ENCODE measurements at regions of chr11 and their contacts with region 1.

Region 1: DNA sequence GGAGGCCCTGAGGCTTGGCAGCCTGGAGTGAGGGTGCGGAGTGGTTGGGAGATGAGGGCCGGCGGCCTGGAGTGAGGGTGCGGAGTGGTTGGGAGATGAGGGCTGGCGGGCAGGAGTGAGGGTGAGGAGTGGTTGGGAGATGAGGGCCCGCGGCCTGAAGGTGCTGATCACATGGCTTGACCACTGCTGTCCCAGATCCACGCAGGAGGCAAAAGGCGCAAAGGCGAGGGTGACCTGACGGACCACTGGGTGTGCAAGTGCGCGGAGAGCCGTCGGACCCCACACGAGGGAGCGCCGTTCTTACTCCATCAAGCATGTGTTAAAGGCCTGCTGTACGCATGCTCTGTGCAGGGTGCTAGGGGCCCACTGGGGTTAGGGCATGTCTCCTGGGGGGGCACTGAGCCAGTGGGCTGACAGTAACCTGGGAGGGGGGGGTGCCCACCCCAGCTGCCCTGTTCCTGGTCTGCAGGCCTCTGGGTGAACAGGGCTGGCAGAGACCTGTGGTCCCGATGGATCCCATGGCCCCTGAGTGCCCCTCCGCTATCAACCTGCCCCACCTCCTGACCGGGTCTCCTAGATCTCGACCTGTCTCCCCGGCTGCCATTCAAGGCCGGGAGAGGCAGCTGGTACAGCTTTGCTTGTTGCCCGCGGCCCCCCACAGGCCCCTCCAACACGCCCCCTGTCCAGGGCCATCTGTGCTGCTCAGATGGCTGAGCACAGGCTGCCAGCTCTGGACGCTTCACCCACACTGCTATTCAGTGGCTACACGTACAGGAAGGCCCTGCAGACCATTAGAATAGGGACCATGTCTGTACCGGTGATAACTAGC is 21.1 kb downstream of the MRGPRD start:
- DNase-seq: no peak
- H3K4me3 ChIP-seq: no peak overlapping the region
- H3K4me3 Mint-ChIP-seq: no peak overlapping the region
- H3K27ac ChIP-seq: no peak overlapping the region
- H3K27ac Mint-ChIP-seq: no peak overlapping the region
- H3K4me1 ChIP-seq: peaks cover 18% of the 10 kb centered on the region in 2 donors
- H3K4me1 Mint-ChIP-seq: peaks cover 19% of the 10 kb centered on the region
- H3K27me3 ChIP-seq: no peaks in the 10 kb centered on the region
- H3K27me3 Mint-ChIP-seq: peaks cover 1 to 8% (median 2%) of the 10 kb centered on the region in 3 donors
- CTCF ChIP-seq: no peak

Region 2: DNA sequence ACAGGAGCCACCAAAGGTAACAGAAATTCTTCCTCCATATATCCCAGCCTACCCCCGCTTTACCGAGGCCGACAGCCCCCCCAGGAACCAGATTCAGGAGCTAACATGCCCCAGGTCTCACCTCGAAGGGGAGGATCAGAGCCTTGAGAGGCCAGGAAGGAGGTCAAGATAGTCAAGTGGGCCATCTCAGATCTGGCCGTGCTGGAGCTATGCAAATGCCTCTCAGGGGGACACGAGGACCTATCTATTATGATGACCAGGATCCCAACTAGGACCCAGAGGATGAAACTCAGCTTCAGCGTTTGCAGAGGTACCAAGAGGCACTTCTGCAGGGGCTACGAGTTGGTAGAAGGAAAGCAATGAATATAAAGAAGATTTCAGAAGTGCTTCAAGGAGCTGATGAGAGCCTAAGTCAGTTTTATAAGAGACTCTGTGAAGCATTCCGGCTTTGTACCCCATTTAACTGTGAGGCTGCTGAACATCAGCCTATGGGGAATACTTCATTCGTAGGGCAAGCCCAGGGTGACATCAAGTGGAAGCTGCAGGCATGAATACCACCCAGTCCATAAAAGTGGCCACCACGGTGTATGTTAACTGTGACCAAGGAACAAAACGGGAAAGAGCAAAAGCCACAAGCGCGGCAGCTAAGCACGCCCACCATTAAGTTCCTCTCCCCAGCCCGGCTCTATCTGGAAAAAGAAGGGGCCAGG is 90.3 kb before region 1 on chr11:
- intact Hi-C with region 1: no loop called
- DNase-seq: peak; percentile 6 to 26 (median 25)
- H3K4me3 ChIP-seq: peak overlapping the region; percentile 51 to 90 (median 80)
- H3K4me3 Mint-ChIP-seq: peak overlapping the region; percentile 98 to 99
- H3K27ac ChIP-seq: peak overlapping the region in 1 of 2 donors; percentile 46
- H3K27ac Mint-ChIP-seq: peak overlapping the region in 5 of 7 donors; percentile 61 to 87 (median 80)
- H3K4me1 ChIP-seq: peaks cover 7 to 13% of the 10 kb centered on the region in 2 donors
- H3K4me1 Mint-ChIP-seq: peaks cover 19% of the 10 kb centered on the region
- H3K27me3 ChIP-seq: no peaks in the 10 kb centered on the region
- H3K27me3 Mint-ChIP-seq: peaks cover 3 to 7% (median 6%) of the 10 kb centered on the region in 3 donors
- CTCF ChIP-seq: no peak

Region 3: DNA sequence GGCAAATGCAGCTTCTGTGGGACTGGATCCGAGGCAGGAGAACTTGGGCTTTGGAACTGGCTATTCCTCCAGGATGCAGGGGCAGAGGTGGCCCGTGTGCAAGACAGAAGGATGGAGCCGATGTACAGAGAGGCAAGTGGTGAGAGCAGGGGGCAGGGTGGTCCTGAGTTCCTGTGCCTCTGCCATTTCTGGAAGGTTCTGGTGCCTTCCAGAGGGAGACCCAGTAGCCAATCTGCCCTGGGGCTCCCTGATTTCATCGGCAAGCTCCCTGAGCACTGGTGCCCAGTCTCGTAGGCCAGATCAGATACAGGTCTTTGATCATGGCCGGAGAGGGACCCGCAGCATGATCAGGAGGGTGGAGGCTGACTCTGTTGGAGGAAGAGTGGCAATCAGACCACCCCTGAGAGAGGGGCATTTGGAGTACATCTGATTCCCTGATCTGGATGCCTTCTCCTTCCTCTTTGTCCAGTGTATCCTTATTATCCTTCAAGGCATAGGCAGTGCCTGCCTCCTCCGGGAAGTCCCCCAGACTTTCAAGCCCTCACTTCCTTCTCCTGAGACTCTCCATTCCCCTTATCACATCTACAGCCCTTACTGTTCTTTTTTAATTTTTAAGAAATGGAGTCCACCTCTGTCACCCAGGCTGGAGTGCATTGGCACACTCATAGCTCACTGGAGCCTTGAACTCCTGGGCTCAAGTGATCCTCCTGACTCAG is 11.4 kb after region 1 on chr11:
- intact Hi-C with region 1: loop called in 1 of 2 experiments (anchors 1 kb)
- DNase-seq: no peak
- H3K4me3 ChIP-seq: no peak overlapping the region
- H3K4me3 Mint-ChIP-seq: no peak overlapping the region
- H3K27ac ChIP-seq: no peak overlapping the region
- H3K27ac Mint-ChIP-seq: peak overlapping the region in 1 of 7 donors; percentile 29
- H3K4me1 ChIP-seq: no peaks in the 10 kb centered on the region
- H3K4me1 Mint-ChIP-seq: peaks cover 1% of the 10 kb centered on the region
- H3K27me3 ChIP-seq: peaks cover 0 to 8% of the 10 kb centered on the region in 2 donors
- H3K27me3 Mint-ChIP-seq: peaks cover 5 to 13% (median 9%) of the 10 kb centered on the region in 3 donors
- CTCF ChIP-seq: no peak

Region 4: DNA sequence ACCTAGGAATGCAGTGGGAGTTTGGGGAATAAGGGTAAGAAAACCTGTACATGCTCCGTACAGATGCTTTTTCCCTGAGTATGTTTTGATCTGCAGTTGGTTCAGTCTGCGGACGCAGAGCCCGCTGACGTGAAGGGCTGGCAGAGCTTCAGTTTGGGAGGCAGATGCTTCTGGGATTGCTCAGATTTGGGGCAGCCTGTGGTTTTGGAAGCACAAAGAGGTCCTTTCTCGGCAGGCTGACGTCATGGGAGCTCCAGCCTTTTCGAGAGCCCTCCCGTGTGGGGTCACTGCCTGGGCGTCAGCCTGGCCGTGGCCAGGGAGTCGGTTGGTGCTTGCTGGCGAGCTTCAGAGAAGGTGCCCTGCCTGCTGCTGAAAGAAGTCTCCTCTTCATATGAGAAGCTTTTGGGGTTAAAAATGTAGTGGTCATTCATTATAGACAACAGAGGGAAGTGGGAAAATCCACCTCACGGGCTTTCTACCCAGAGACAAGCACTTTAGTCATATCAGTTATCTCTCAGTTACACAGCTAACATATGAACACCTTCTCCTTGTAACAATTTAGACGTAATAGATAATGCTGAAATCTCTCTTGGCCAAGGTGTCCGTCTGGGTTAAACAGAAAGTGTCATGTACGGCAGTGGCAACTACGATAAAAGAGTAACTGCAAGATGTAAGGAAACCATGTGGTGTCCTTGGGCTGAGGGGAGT is 115.9 kb after region 1 on chr11:
- intact Hi-C with region 1: no loop called
- DNase-seq: no peak
- H3K4me3 ChIP-seq: no peak overlapping the region
- H3K4me3 Mint-ChIP-seq: no peak overlapping the region
- H3K27ac ChIP-seq: peak overlapping the region in 1 of 2 donors; percentile 48
- H3K27ac Mint-ChIP-seq: peak overlapping the region; percentile 29 to 85 (median 69)
- H3K4me1 ChIP-seq: peaks cover 25 to 29% of the 10 kb centered on the region in 2 donors
- H3K4me1 Mint-ChIP-seq: peaks cover 28% of the 10 kb centered on the region
- H3K27me3 ChIP-seq: no peaks in the 10 kb centered on the region
- H3K27me3 Mint-ChIP-seq: peaks cover 0 to 2% (median 0%) of the 10 kb centered on the region in 3 donors
- CTCF ChIP-seq: no peak

Measured in CD14-positive monocyte (primary cell).